Head of caudate nucleus (tissue), 42 donors: ENCODE measurements at regions of chr11 and their contacts with region 1.

Region 1: GRCh38 chr11:129331871-129332274 is 43.8 kb upstream of the BARX2 start:
- DNase-seq: peak; percentile 78 to 95 (median 89)

Region 2: GRCh38 chr11:129230006-129230405 is 101.9 kb before region 1 on chr11:
- intact Hi-C with region 1: loop called (anchors 5 kb)
- DNase-seq: no peak

Region 3: GRCh38 chr11:129291546-129291945 is 40.3 kb before region 1 on chr11:
- intact Hi-C with region 1: no loop called
- DNase-seq: peak; percentile 38 to 89 (median 77)

Region 4: DNA sequence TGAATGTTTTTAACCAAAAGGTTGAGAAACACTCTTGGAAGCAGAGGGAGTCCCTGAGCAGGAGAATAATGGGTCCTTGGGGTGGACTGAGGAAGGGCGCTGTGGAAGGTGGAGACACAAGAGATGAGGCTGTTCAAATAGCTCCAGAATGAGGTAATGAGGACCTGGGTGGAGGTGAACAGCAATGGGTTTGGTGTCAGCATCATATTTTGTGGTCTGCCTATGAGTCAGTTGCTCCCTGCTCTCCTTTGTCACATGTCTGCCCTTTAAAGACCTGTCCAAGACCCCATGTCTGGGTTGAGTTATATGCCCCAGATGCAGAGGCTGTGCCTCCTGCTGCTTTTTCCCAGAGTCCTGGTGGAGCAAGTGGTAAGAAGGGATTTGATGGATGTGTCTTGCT is 157.4 kb after region 1 on chr11:
- intact Hi-C with region 1: no loop called
- DNase-seq: no peak